ENCODE measurements at regions of chr7 and their contacts with region 1.

Region 1: GRCh38 chr7:149245244-149245643 is 5.8 kb downstream of the ZNF212 start:
- DNase-seq: no peak
- H3K4me3 ChIP-seq: no peak overlapping the region
- H3K27ac ChIP-seq: no peak overlapping the region
- H3K4me1 ChIP-seq: peaks cover 5% of the 10 kb centered on the region
- H3K27me3 ChIP-seq: no peaks in the 10 kb centered on the region
- CTCF ChIP-seq: no peak

Region 2: GRCh38 chr7:149202831-149203231 is 42.4 kb before region 1 on chr7:
- CTCF ChIA-PET with region 1: no interaction called
- dilution Hi-C with region 1: loop called (anchors 5 kb)
- in situ Hi-C with region 1: no loop called
- intact Hi-C with region 1: no loop called
- DNase-seq: no peak
- H3K4me3 ChIP-seq: no peak overlapping the region
- H3K27ac ChIP-seq: no peak overlapping the region
- H3K4me1 ChIP-seq: peaks cover 5% of the 10 kb centered on the region
- H3K27me3 ChIP-seq: no peaks in the 10 kb centered on the region
- CTCF ChIP-seq: no peak

Region 3: GRCh38 chr7:149310113-149310836 is 65.0 kb after region 1 on chr7:
- CTCF ChIA-PET with region 1: no interaction called
- dilution Hi-C with region 1: no loop called
- in situ Hi-C with region 1: no loop called
- intact Hi-C with region 1: no loop called
- DNase-seq: peak; percentile 85
- H3K4me3 ChIP-seq: no peak overlapping the region
- H3K27ac ChIP-seq: no peak overlapping the region
- H3K4me1 ChIP-seq: no peaks in the 10 kb centered on the region
- H3K27me3 ChIP-seq: no peaks in the 10 kb centered on the region
- CTCF ChIP-seq: peak; percentile 63 to 71

Measured in mammary epithelial cell (primary cell).